ENCODE measurements at regions of chr3 and their contacts with region 1.

Region 1: DNA sequence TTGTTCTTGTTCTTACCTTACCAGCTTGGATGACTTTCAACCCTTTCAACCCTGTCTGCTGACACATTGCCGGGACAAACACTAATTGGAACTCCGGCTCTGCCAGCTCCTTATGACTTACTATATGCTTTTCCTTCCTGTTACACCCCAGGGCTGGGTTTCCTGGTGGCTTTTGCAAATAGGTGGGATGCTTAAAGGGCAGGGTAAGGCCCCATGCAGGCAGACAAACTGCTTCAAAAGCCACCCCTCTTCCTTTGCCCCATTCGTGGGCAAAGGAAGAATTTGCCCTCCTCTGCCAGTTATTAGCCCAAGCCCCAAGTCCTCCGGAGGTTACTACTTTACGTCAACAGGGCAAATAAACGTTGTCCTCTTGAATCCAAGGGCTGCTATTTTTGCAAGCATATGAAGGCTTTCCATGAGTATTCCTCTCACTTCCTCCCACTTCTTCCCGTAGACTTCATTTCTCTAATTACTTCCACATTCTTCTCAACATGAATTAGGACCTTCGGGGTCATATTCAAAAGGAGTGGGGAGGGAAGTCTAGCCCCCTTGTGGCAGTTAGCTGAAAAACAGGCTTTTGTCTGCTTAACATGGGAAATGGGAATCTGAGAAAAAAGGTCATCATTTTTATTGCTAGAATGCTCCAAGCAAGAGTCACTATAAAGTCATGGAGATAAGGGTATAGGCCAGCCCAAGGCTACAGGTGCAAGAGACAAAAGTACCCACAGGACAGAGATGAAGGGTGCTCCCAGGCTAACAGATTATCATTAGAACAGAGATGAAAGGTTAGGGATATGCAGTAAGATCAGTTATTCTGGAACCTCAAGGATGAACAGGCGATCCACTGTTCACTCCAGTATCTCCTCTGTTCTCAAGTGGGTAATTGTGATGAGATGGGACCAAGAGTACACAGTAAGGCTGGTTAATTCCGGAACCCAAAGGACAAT is 56.3 kb upstream of the FSTL1 start:
- DNase-seq: peak; percentile 45
- H3K4me3 Mint-ChIP-seq: peak overlapping the region; percentile 16
- H3K27ac Mint-ChIP-seq: peak overlapping the region; percentile 57
- H3K4me1 Mint-ChIP-seq: peaks cover 19% of the 10 kb centered on the region
- H3K27me3 Mint-ChIP-seq: no peaks in the 10 kb centered on the region
- CTCF ChIP-seq: peak; percentile 41

Region 2: GRCh38 chr3:120239644-120240043 is 267.5 kb before region 1 on chr3:
- CTCF ChIA-PET with region 1: interaction called, 3 read pairs
- intact Hi-C with region 1: loop called (anchors 5 kb)
- DNase-seq: no peak
- H3K4me3 Mint-ChIP-seq: no peak overlapping the region
- H3K27ac Mint-ChIP-seq: no peak overlapping the region
- H3K4me1 Mint-ChIP-seq: no peaks in the 10 kb centered on the region
- H3K27me3 Mint-ChIP-seq: peaks cover 57% of the 10 kb centered on the region
- CTCF ChIP-seq: no peak

Region 3: GRCh38 chr3:120450600-120451271 is 56.4 kb before region 1 on chr3 and contains the start of gene FSTL1:
- CTCF ChIA-PET with region 1: no interaction called
- intact Hi-C with region 1: loop called (anchors 2 kb)
- DNase-seq: peak; percentile 35
- H3K4me3 Mint-ChIP-seq: peak within 1 kb of the TSS; percentile 82
- H3K27ac Mint-ChIP-seq: peak within 1 kb of the TSS; percentile 58
- H3K4me1 Mint-ChIP-seq: peaks cover 8% of the 10 kb centered on the region
- H3K27me3 Mint-ChIP-seq: no peaks in the 10 kb centered on the region
- CTCF ChIP-seq: no peak
- total RNA-seq, gene FSTL1: 10.0 and 18.5 TPM in 2 replicates

Region 4: GRCh38 chr3:120558771-120559241 is 51.7 kb after region 1 on chr3:
- CTCF ChIA-PET with region 1: no interaction called
- intact Hi-C with region 1: loop called (anchors 2 kb)
- DNase-seq: peak; percentile 86
- H3K4me3 Mint-ChIP-seq: peak overlapping the region; percentile 75
- H3K27ac Mint-ChIP-seq: peak overlapping the region; percentile 91
- H3K4me1 Mint-ChIP-seq: peaks cover 20% of the 10 kb centered on the region
- H3K27me3 Mint-ChIP-seq: no peaks in the 10 kb centered on the region
- CTCF ChIP-seq: peak; percentile 90

Region 5: DNA sequence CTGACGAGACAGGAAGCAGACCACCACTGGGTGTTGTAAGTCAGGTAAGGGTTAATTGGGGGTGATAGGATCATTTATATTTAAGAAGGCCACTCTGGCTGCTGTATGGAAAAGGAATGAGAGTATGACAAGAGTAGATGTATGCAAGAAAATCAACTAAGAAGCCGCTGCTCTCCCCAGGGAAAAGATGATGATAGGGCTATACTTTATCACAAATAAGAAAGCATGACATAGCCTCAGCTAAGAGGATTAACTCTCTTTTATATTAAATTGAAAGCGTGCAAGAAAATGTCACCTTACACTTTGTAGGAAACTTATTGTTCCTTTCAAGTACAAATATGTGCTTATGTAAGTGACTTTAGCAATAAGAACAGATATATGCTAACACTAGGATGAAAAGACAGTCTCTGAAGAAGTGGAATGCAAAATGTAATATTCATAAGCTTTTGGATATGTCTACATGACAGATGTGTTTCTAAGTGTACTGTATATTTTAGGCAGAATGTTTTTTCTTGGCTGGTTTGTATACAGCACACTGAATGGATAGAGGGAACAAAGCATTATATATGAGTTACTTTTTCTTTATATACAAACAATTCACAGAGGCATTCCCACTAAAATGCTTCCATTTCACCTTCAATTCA is 80.4 kb after region 1 on chr3:
- CTCF ChIA-PET with region 1: no interaction called
- intact Hi-C with region 1: no loop called
- DNase-seq: no peak
- H3K4me3 Mint-ChIP-seq: no peak overlapping the region
- H3K27ac Mint-ChIP-seq: no peak overlapping the region
- H3K4me1 Mint-ChIP-seq: no peaks in the 10 kb centered on the region
- H3K27me3 Mint-ChIP-seq: peaks cover 8% of the 10 kb centered on the region
- CTCF ChIP-seq: no peak

Measured in Calu3 (cell line).